SK-N-SH (cell line): ENCODE measurements at regions of chr1 and their contacts with region 1.

Region 1: DNA sequence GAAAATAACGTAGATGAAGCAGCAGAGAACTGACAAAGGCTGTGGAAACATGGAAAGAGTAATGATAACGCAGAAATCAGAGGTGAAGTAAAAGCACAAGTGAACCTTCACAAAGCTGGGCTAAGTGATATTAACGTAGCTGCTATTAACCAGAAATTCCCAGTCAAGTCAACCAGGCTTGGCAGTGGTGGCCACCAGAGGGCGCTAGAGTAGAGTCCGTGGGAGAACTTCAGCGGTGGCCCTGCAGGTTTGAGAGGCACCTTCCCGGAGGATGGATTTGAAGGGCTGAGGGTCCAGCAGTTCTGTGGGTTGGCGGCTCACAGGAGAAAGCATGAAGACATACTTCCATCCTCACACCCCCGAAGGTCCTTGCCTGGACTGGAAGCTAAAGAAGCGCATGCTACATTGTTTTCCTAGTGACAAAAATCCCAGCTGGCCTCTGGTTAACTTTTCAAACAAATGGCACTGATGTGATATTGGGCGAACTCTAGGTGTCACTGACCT is 81.7 kb upstream of the ZNF648 start:
- DNase-seq: peak; percentile 75
- H3K4me3 ChIP-seq: peak overlapping the region in 1 of 2 experiments; percentile 54; a peak in 1 of 4 replicates
- H3K27ac ChIP-seq: no peak overlapping the region; a peak in 1 of 4 replicates
- H3K4me1 ChIP-seq: peaks cover 0 to 14% of the 10 kb centered on the region in 2 experiments; a peak in 1 of 4 replicates
- H3K27me3 ChIP-seq: no peaks in the 10 kb centered on the region
- CTCF ChIP-seq: peak; percentile 73
- EP300 ChIP-seq: no peak
- RAD21 ChIP-seq: peak; percentile 86

Region 2: DNA sequence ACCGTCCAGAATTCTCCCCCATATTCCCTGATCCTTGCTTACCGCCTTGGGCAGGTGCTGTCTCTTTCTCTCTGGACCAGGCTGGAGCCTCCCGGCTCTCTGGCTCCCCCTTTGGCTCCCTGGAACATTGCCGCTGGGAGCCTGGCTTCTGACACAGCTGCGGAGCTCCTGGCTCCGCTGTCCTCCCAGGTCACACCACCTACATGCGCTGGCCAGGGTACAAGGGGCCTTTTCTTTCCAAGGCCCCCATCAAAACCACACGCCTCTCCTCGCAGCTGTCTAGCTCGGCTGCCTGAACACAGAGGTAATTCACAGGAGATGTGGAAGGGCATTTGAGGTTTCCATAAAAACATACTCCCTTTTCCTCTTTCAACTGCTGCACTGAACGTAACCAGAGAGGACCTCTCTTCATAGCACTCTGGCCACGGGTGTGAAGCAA is 74.2 kb before region 1 on chr1:
- CTCF ChIA-PET with region 1: interaction called, 11 read pairs
- POLR2A ChIA-PET with region 1: no interaction called
- DNase-seq: peak; percentile 84
- H3K4me3 ChIP-seq: no peak overlapping the region
- H3K27ac ChIP-seq: no peak overlapping the region
- H3K4me1 ChIP-seq: no peaks in the 10 kb centered on the region; a peak in 1 of 4 replicates
- H3K27me3 ChIP-seq: no peaks in the 10 kb centered on the region
- CTCF ChIP-seq: peak; percentile 41
- EP300 ChIP-seq: no peak
- RAD21 ChIP-seq: peak; percentile 49

Region 3: DNA sequence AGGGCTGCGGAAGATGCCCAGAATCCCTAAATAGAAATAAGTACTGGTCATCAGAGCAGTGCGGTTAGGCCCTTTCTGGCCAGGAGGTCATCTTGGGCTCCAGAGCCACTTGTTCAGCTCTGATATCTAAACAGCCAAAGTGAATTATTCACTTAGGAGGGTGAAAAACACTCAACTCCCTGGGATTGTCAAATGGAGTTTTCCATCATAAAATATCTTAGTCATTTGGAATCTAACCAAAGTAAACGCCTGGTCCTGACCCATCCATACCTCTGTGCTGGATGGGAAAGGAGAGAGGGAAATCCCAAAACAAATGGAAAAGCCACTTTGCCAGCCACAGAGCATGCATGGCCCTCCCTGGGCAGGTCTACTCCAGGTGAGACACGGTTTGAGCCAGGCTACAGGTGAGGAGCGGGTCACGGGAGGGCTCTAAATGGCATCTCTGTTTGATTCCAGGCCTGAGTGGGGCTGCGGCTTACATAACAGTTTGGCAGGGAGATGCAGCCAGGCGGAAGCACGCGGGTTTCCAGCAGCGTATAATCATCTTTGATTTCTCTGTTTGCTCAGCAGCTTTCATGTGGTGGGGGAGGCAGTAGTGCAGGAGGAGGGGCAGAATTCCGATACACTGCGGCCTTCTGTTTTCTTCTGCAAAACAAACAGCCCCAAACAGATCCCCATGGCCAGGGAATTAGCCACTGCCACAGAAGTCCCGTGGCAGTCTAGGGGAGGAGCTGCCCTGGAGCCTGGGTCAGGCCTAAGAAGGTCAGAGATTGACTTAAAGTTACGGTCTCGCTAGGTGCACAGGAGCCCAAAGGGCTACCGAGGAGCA is 22.6 kb before region 1 on chr1:
- CTCF ChIA-PET with region 1: interaction called, 69 read pairs
- POLR2A ChIA-PET with region 1: no interaction called
- DNase-seq: no peak
- H3K4me3 ChIP-seq: no peak overlapping the region
- H3K27ac ChIP-seq: no peak overlapping the region
- H3K4me1 ChIP-seq: no peaks in the 10 kb centered on the region
- H3K27me3 ChIP-seq: no peaks in the 10 kb centered on the region
- CTCF ChIP-seq: no peak
- EP300 ChIP-seq: no peak
- RAD21 ChIP-seq: no peak

Region 4: DNA sequence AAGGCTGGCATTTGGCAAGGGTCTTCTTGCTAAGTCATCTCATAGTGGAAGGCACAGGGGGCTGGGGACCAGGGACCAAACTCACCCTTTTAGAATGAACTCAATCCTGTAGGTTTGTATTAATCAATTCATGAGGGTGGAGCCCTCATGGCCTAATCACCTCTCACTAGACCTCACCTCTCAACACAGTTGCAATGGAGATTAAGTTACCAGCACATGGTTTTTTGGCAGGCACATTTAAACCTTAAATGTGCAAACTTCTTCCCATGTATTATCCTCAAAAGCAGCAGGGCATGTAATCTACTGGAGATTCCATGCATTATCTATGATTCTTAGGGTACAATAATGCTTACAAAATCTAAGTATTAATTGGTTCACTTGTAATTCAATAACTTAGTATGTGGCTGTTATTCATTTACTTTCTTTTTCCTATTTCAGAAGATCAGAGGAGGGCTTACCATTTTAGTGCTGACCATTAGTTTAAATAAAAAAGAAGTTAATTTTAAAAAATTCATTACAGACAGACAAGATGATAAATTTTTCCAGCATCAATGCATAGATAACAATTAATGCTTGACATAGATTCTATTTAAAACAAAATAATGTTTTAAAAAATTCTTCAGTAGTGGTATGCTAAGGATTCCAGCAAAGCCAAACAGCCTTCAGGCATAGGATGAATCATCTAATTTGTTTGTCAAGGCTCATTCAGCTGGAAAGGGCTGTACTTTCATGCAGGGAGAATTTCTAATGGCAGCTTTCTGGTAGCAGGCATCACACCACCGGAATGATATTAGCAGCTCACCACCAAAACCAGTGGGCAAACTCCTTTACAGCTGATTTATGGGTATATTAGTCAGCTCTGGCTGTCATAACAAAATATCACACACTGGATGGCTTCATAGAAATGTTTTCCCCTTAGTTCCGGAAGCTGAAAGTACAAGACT is 42.9 kb after region 1 on chr1:
- CTCF ChIA-PET with region 1: interaction called, 10 read pairs
- POLR2A ChIA-PET with region 1: no interaction called
- DNase-seq: no peak
- H3K4me3 ChIP-seq: no peak overlapping the region
- H3K27ac ChIP-seq: no peak overlapping the region
- H3K4me1 ChIP-seq: no peaks in the 10 kb centered on the region
- H3K27me3 ChIP-seq: no peaks in the 10 kb centered on the region
- CTCF ChIP-seq: no peak
- EP300 ChIP-seq: no peak
- RAD21 ChIP-seq: no peak

Region 5: DNA sequence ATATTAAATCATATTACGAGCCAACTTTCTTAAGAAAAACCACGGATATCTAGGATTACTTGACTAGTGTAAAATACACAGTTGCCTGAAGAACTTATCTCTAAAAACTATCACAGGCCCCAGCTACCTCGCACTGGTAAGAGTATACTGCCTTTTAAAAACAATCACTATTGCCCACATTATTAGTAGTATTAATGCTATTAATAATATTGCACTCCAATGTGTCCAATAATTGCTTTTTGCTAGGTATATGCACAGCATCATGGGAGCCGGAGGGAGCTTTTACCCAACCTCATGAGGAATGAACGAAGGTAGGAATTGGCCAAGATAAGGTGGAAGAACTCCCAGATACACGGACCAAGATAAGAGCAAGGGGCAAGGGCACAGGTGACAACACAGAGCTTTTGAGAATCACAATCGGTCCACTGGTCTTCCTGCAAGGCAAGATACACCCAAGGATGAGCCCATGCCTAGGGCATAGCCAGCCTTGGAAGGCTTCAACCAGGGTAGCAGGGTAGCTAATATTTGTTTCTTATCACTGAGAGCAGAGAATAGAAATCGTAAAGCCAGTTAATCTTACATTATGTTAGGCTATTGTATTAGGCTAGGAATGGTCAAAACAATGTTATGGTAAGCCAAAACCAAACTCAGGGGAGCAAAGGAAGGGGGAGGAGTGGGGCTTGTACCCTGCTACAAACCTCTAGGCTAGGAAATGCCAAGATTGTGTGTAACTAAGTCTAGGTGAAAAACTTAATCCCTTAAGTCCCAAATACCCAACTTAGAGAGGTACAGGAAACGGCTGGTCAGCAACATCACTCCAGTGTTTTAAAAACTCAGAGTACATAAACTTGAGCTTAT is 239.0 kb after region 1 on chr1:
- CTCF ChIA-PET with region 1: interaction called, 25 read pairs
- POLR2A ChIA-PET with region 1: no interaction called
- DNase-seq: no peak
- H3K4me3 ChIP-seq: no peak overlapping the region
- H3K27ac ChIP-seq: no peak overlapping the region
- H3K4me1 ChIP-seq: no peaks in the 10 kb centered on the region
- H3K27me3 ChIP-seq: no peaks in the 10 kb centered on the region
- CTCF ChIP-seq: no peak
- EP300 ChIP-seq: no peak
- RAD21 ChIP-seq: no peak

Region 6: DNA sequence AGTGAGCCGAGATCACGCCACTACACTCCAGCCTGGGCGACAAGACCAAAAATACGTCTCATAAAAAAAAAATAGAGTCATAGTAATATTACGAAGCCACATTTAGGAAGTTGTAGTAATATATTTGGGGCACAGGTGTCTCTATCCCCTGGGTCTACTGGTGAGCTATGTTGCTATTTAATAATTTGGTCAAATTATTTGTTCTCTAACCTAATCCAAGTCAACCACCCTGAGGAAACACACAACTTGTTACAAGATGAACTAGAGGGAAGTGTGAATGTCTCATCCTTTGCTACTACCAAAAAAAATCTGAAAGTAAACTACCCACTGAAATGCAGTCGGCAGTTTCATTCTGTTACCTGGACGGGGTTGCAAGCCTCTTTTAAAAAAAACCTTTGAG is 505.8 kb after region 1 on chr1:
- CTCF ChIA-PET with region 1: no interaction called
- POLR2A ChIA-PET with region 1: no interaction called
- DNase-seq: no peak
- H3K4me3 ChIP-seq: no peak overlapping the region
- H3K27ac ChIP-seq: no peak overlapping the region
- H3K4me1 ChIP-seq: peaks cover 0 to 4% of the 10 kb centered on the region in 2 experiments; a peak in 1 of 4 replicates
- H3K27me3 ChIP-seq: no peaks in the 10 kb centered on the region; the same call in 1 of the 2 replicates
- CTCF ChIP-seq: no peak
- EP300 ChIP-seq: no peak
- RAD21 ChIP-seq: no peak

Region 7: GRCh38 chr1:182781841-182782586 is 638.8 kb after region 1 on chr1:
- CTCF ChIA-PET with region 1: interaction called, 15 read pairs
- POLR2A ChIA-PET with region 1: no interaction called
- DNase-seq: peak; percentile 45
- H3K4me3 ChIP-seq: no peak overlapping the region; a peak in 1 of 4 replicates
- H3K27ac ChIP-seq: peak overlapping the region in 1 of 2 experiments; percentile 68; a peak in 2 of 4 replicates
- H3K4me1 ChIP-seq: peaks cover 0 to 11% of the 10 kb centered on the region in 2 experiments; a peak in 2 of 4 replicates
- H3K27me3 ChIP-seq: no peaks in the 10 kb centered on the region
- CTCF ChIP-seq: peak; percentile 63
- EP300 ChIP-seq: no peak
- RAD21 ChIP-seq: peak; percentile 83